ENCODE measurements at regions of chr1 and their contacts with region 1.

Region 1: GRCh38 chr1:119632841-119633240 is 15.2 kb downstream of the ZNF697 start:
- DNase-seq: no peak
- H3K4me3 ChIP-seq: no peak overlapping the region
- H3K27ac ChIP-seq: no peak overlapping the region
- H3K4me1 ChIP-seq: no peaks in the 10 kb centered on the region
- CTCF ChIP-seq: no peak

Region 2: GRCh38 chr1:119582801-119583200 is 50.0 kb before region 1 on chr1:
- CTCF ChIA-PET with region 1: no interaction called
- POLR2A ChIA-PET with region 1: no interaction called
- intact Hi-C with region 1: no loop called
- DNase-seq: peak; percentile 32
- H3K4me3 ChIP-seq: no peak overlapping the region
- H3K27ac ChIP-seq: no peak overlapping the region
- H3K4me1 ChIP-seq: no peaks in the 10 kb centered on the region
- CTCF ChIP-seq: peak; percentile 71

Region 3: DNA sequence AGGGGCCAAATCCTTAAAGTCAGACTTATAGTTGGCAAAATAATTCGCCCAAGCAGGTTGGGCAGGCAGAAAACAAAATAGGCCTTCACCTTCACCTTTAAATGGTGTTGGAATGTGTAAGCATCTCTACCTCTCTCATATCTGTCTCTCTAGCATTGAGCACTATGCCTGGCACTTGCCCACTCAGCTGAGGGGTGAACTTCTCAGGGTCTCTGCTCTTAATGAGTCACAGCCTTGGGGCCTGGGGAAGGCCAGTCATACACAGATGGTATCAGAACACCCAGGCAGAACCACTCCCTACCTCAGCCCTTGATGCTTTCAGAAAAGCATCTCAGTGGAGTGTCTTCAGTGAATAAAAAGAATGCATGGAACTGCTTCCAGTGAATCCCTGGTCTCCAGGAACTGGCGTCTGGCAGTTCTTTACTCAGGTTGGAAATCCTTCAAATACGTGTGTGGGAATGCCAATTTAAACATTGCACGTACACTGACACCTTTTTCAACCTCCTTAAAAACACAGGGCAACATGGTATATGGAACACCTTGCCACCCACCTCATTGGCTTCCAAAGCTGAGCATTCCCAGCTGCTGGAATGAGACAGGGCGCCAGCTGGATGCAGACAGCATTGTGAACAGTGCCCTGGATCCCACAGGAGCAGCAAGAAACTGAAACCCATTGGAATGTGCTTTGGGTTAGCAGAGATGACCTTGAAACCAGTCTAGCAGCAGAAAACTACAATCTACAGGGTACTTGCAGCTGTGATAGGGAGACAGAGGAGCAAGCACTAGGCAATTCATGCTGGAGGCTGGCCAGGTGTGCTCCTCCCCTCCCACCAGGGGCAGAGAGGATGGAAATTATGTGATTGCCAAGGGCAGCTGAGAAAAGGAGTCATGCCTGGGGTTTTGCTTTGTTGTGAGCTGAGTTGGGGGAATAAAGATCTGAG is 14.8 kb before region 1 on chr1:
- CTCF ChIA-PET with region 1: no interaction called
- POLR2A ChIA-PET with region 1: no interaction called
- intact Hi-C with region 1: no loop called
- DNase-seq: no peak
- H3K4me3 ChIP-seq: no peak overlapping the region
- H3K27ac ChIP-seq: no peak overlapping the region
- H3K4me1 ChIP-seq: no peaks in the 10 kb centered on the region
- CTCF ChIP-seq: no peak

Region 4: GRCh38 chr1:119647734-119648619 is 15.1 kb after region 1 on chr1 and contains the start of gene ZNF697:
- CTCF ChIA-PET with region 1: no interaction called
- POLR2A ChIA-PET with region 1: no interaction called
- intact Hi-C with region 1: no loop called
- DNase-seq: no peak
- H3K4me3 ChIP-seq: no peak within 1 kb of the TSS
- H3K27ac ChIP-seq: no peak within 1 kb of the TSS
- H3K4me1 ChIP-seq: no peaks in the 10 kb centered on the region
- CTCF ChIP-seq: no peak
- total RNA-seq, gene ZNF697: not detected in 2 replicates

Region 5: DNA sequence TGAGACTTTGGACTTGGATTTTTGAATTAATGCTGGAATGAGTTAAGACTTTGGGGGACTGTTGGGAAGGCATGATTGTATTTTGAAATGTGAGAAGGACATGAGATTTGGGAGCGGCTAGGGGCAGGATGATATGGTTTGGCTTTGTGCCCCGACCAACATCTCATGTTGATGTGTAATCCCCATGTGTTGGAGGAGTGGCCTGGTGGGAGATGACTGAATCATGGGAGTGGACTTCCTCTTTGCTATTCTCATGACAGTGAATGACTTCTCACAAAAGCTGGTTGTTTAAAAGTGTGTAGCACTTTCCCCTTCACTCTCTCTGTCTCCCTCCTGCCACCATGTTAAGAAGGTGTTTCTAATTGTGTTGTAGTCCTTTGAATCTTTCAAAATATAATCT is 69.5 kb after region 1 on chr1:
- CTCF ChIA-PET with region 1: interaction called, 12 read pairs
- POLR2A ChIA-PET with region 1: no interaction called
- intact Hi-C with region 1: no loop called
- DNase-seq: no peak
- H3K4me3 ChIP-seq: no peak overlapping the region
- H3K27ac ChIP-seq: no peak overlapping the region
- H3K4me1 ChIP-seq: no peaks in the 10 kb centered on the region
- CTCF ChIP-seq: no peak

Measured in OCI-LY7 (cell line).